WTC11 (cell line): ENCODE measurements at regions of chr9 and their contacts with region 1.

Region 1: GRCh38 chr9:95736370-95736769 is 139.1 kb upstream of the ERCC6L2 start:
- DNase-seq: peak; percentile 50
- ATAC-seq: peak; percentile 94
- H3K4me3 Mint-ChIP-seq: no peak overlapping the region
- H3K27ac Mint-ChIP-seq: no peak overlapping the region
- H3K4me1 Mint-ChIP-seq: peaks cover 6% of the 10 kb centered on the region
- H3K27me3 Mint-ChIP-seq: no peaks in the 10 kb centered on the region
- CTCF ChIP-seq: peak; percentile 48; the same call in 1 of the 2 replicates

Region 2: DNA sequence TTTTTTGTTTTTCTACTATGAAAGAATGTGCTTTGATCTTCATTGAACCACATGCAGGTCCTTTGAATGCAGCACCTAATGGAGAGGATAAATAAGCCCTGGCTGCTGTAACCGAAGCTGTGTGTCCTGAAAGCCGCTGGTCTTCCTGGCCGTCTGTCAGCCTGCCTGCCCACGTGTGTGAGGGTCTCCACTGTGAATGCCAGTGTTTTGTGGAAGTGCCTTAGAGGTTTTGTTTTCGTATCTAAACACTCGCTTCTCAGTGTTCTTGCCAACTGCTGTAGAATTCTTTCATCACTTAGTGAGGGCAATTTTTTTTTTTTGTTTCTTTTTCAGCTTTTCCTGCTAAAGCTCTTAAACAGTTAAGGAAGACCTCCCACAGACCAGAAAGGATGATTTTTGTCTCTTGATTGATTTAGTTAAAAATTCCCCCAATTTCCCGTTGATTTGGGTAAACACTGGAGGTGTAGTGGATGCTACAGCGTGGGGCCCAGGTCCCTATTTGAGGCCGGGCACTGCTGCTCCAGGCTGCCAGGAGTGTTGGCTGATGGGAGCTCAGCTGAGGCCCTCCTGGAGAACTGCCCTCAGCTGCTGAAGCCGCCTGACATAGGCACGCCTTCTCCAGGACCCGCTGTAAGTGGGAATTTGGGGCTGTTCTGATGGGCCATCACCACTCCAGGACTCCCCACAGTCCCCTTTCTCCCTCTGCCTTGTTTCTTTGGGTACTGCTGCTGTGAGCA is 190.4 kb before region 1 on chr9:
- CTCF ChIA-PET with region 1: no interaction called
- POLR2A ChIA-PET with region 1: no interaction called
- DNase-seq: no peak
- ATAC-seq: no peak
- H3K4me3 Mint-ChIP-seq: no peak overlapping the region
- H3K27ac Mint-ChIP-seq: no peak overlapping the region
- H3K4me1 Mint-ChIP-seq: peaks cover 4% of the 10 kb centered on the region; the same call in 1 of the 2 replicates
- H3K27me3 Mint-ChIP-seq: peaks cover 16% of the 10 kb centered on the region
- CTCF ChIP-seq: no peak

Region 3: GRCh38 chr9:95750725-95751517 is 14.6 kb after region 1 on chr9:
- CTCF ChIA-PET with region 1: interaction called, 35 read pairs
- POLR2A ChIA-PET with region 1: no interaction called
- DNase-seq: no peak
- ATAC-seq: no peak
- H3K4me3 Mint-ChIP-seq: peak overlapping the region; percentile 44
- H3K27ac Mint-ChIP-seq: no peak overlapping the region
- H3K4me1 Mint-ChIP-seq: peaks cover 42% of the 10 kb centered on the region
- H3K27me3 Mint-ChIP-seq: peaks cover 39% of the 10 kb centered on the region
- CTCF ChIP-seq: no peak

Region 4: GRCh38 chr9:95756986-95757385 is 20.6 kb after region 1 on chr9:
- CTCF ChIA-PET with region 1: interaction called, 35 read pairs
- POLR2A ChIA-PET with region 1: no interaction called
- DNase-seq: no peak
- ATAC-seq: no peak
- H3K4me3 Mint-ChIP-seq: no peak overlapping the region
- H3K27ac Mint-ChIP-seq: no peak overlapping the region; the same call in 1 of the 2 replicates
- H3K4me1 Mint-ChIP-seq: peaks cover 53% of the 10 kb centered on the region
- H3K27me3 Mint-ChIP-seq: peaks cover 41% of the 10 kb centered on the region
- CTCF ChIP-seq: no peak

Region 5: DNA sequence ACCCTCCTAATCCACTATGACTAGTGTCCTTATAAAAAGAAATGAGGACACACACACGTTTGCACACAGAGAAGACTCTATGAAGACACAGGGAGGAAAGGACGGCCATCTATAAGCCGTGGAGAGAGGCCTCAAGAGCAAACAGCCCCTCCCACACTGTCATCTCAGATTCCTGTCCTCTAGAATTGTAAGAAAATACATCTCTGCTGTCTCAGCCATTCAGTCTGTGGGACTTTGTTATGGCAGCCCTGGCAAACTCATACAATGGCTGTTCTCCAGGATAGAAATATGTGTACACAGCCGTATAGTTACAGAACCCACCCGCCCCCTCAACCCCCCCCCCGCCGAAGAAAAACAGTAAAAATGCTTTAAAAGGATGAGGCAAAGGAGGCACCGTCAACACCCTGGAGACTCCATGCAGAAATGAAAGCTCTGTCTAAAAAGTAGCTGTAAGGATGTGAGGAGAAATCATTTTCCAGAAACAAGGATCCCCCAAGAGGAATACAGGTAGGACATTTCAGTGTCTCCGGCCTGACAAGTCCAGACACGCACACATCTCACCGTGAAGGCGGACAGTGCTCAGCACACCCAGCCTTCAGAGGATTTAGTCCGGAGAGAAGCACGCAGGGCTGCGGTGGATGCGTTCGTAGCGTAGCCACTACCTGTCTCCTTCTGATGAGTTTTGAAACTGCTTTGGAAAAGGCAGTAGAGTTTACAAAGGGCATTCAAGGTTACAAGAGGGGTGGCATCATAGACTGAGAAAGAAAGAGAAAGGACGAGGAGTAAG is 28.4 kb after region 1 on chr9:
- CTCF ChIA-PET with region 1: interaction called, 15 read pairs
- POLR2A ChIA-PET with region 1: no interaction called
- DNase-seq: no peak
- ATAC-seq: peak; percentile 31; the same call in 1 of the 2 replicates
- H3K4me3 Mint-ChIP-seq: no peak overlapping the region
- H3K27ac Mint-ChIP-seq: peak overlapping the region; percentile 78; the same call in 1 of the 2 replicates
- H3K4me1 Mint-ChIP-seq: peaks cover 41% of the 10 kb centered on the region
- H3K27me3 Mint-ChIP-seq: peaks cover 2% of the 10 kb centered on the region
- CTCF ChIP-seq: no peak

Region 6: GRCh38 chr9:95771556-95772246 is 35.3 kb after region 1 on chr9:
- CTCF ChIA-PET with region 1: interaction called, 12 read pairs
- POLR2A ChIA-PET with region 1: no interaction called
- DNase-seq: no peak
- ATAC-seq: peak; percentile 8; the same call in 1 of the 2 replicates
- H3K4me3 Mint-ChIP-seq: peak overlapping the region; percentile 50
- H3K27ac Mint-ChIP-seq: no peak overlapping the region
- H3K4me1 Mint-ChIP-seq: peaks cover 46% of the 10 kb centered on the region
- H3K27me3 Mint-ChIP-seq: peaks cover 29% of the 10 kb centered on the region
- CTCF ChIP-seq: no peak

Region 7: GRCh38 chr9:95864852-95865580 is 128.6 kb after region 1 on chr9:
- CTCF ChIA-PET with region 1: no interaction called
- POLR2A ChIA-PET with region 1: no interaction called
- DNase-seq: no peak
- ATAC-seq: no peak
- H3K4me3 Mint-ChIP-seq: no peak overlapping the region
- H3K27ac Mint-ChIP-seq: no peak overlapping the region
- H3K4me1 Mint-ChIP-seq: no peaks in the 10 kb centered on the region
- H3K27me3 Mint-ChIP-seq: no peaks in the 10 kb centered on the region
- CTCF ChIP-seq: no peak

Region 8: GRCh38 chr9:95920017-95920416 is 183.6 kb after region 1 on chr9:
- CTCF ChIA-PET with region 1: no interaction called
- POLR2A ChIA-PET with region 1: no interaction called
- DNase-seq: no peak
- ATAC-seq: no peak
- H3K4me3 Mint-ChIP-seq: no peak overlapping the region
- H3K27ac Mint-ChIP-seq: no peak overlapping the region
- H3K4me1 Mint-ChIP-seq: peaks cover 13% of the 10 kb centered on the region
- H3K27me3 Mint-ChIP-seq: no peaks in the 10 kb centered on the region
- CTCF ChIP-seq: no peak

Region 9: GRCh38 chr9:95981761-95982390 is 245.5 kb after region 1 on chr9:
- CTCF ChIA-PET with region 1: no interaction called
- POLR2A ChIA-PET with region 1: no interaction called
- DNase-seq: no peak
- ATAC-seq: no peak
- H3K4me3 Mint-ChIP-seq: no peak overlapping the region
- H3K27ac Mint-ChIP-seq: no peak overlapping the region
- H3K4me1 Mint-ChIP-seq: peaks cover 7% of the 10 kb centered on the region
- H3K27me3 Mint-ChIP-seq: no peaks in the 10 kb centered on the region
- CTCF ChIP-seq: no peak